Esophagus squamous epithelium (tissue), 5 donors: ENCODE measurements at regions of chr10 and their contacts with region 1.

Region 1: DNA sequence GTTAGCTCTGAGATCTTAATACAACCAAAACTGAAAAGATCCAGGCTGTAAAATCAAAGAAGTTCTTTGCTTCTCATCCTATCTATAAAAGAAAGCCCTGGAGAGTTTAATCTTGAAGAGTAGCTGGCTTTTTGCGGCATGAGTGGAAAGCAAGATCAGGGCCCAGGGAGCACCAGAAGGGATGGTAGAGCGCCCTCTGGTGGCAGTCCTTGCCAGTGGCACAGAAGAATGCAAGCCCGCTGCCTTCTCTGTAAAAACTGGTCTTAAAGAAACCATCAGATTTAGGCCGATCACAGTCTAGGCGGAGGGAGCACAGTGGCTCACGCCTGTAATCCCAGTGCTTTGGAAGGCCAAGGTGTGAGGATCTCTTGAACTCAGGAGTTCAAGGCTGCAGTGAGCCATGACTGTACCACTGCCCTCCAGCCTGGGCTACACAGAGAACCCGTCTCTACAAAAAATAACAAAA is 35.6 kb downstream of the CPN1 start:
- DNase-seq: peak; percentile 8
- H3K4me3 ChIP-seq: no peak overlapping the region
- H3K27ac ChIP-seq: peak overlapping the region in 2 of 4 donors; percentile 16 to 79
- H3K4me1 ChIP-seq: peaks cover 7 to 53% (median 18%) of the 10 kb centered on the region in 3 donors
- H3K27me3 ChIP-seq: no peaks in the 10 kb centered on the region
- CTCF ChIP-seq: peak; percentile 80 to 98 (median 95)
- POLR2A ChIP-seq: no peak

Region 2: DNA sequence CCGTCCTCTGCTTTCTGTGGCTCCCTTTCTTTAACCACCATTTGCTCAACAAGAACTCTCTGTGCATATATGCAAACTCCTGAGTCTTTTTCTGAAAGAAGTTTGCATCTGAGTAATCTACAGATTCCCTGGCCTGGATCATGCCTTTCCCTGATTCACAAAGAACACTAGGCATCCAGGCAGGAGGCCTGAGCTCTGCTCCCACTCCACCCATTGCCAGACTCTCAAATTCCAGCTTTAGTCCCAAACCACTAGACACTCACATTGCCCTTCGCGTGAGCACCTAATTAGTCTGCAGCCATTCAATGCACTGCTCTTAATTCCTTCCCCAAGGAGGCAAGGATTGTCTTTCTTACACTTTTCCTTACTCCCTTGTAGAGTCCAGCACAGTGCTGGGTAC is 202.7 kb before region 1 on chr10:
- intact Hi-C with region 1: loop called (anchors 5 kb)
- DNase-seq: no peak
- H3K4me3 ChIP-seq: no peak overlapping the region
- H3K27ac ChIP-seq: no peak overlapping the region
- H3K4me1 ChIP-seq: peaks cover 6 to 11% (median 9%) of the 10 kb centered on the region in 3 donors
- H3K27me3 ChIP-seq: no peaks in the 10 kb centered on the region
- CTCF ChIP-seq: no peak
- POLR2A ChIP-seq: no peak

Region 3: GRCh38 chr10:99976886-99977665 is 69.0 kb before region 1 on chr10:
- intact Hi-C with region 1: loop called (anchors 10 kb)
- DNase-seq: no peak
- H3K4me3 ChIP-seq: no peak overlapping the region
- H3K27ac ChIP-seq: peak overlapping the region; percentile 67 to 84 (median 70)
- H3K4me1 ChIP-seq: peaks cover 12 to 78% (median 35%) of the 10 kb centered on the region in 3 donors
- H3K27me3 ChIP-seq: no peaks in the 10 kb centered on the region
- CTCF ChIP-seq: no peak
- POLR2A ChIP-seq: no peak